Activated T-helper 1 cell treated with anti-CD3 and anti-CD28 coated beads, Interleukin-12 subunit alpha, Interleukin-12 subunit beta, Interleukin-2, Interleukin-4 antibody, amounts not matched to agents 30 ng/mL and 10 ng/mL and 1 ng/mL, durations not matched to agents 14 hours and 24 hours and 36 hours (primary cell): ENCODE measurements at regions of chr9 and their contacts with region 1.

Region 1: DNA sequence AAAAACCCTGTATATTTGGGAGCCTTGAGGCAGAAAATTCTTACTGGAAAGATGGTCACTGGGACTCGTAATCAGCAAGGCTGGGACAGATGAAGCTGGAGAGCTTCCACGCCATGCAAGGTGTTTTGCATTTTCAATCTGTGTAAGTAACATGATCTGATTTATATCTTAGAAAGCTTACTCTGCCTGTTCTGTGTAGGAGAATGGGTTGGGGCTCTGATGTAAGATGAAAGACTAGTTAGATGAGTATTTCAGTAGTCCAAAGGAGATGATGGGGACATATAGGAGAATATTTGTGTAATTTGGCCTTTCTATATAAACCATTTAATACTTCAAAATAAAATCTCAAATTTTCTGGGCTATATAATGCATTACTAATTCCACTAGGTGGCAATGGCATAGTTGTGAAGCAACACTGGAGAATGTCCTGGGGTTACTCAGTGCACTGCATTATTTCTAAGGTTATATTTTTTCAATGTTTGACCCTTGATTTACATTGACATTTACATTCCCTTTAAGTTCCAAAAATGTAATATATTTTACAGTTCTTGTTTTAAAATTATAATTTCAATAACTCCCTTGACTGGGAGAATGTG is 21.9 kb upstream of the FSD1L start:
- DNase-seq: no peak
- H3K4me3 Mint-ChIP-seq: no peak overlapping the region
- H3K27ac Mint-ChIP-seq: no peak overlapping the region
- H3K4me1 Mint-ChIP-seq: no peaks in the 10 kb centered on the region
- H3K27me3 Mint-ChIP-seq: peaks cover 12% of the 10 kb centered on the region

Region 2: GRCh38 chr9:105299190-105299854 is 126.6 kb before region 1 on chr9:
- intact Hi-C with region 1: no loop called
- DNase-seq: no peak
- H3K4me3 Mint-ChIP-seq: no peak overlapping the region
- H3K27ac Mint-ChIP-seq: no peak overlapping the region
- H3K4me1 Mint-ChIP-seq: peaks cover 11% of the 10 kb centered on the region
- H3K27me3 Mint-ChIP-seq: peaks cover 2% of the 10 kb centered on the region

Region 3: GRCh38 chr9:105475302-105475701 is 49.4 kb after region 1 on chr9:
- intact Hi-C with region 1: loop called (anchors 2 kb)
- DNase-seq: no peak
- H3K4me3 Mint-ChIP-seq: no peak overlapping the region
- H3K27ac Mint-ChIP-seq: no peak overlapping the region
- H3K4me1 Mint-ChIP-seq: no peaks in the 10 kb centered on the region
- H3K27me3 Mint-ChIP-seq: no peaks in the 10 kb centered on the region

Region 4: GRCh38 chr9:105557771-105558610 is 132.1 kb after region 1 on chr9 and contains the start of gene FKTN:
- intact Hi-C with region 1: loop called (anchors 1 kb)
- DNase-seq: peak; percentile 76
- H3K4me3 Mint-ChIP-seq: peak within 1 kb of the TSS; percentile 94
- H3K27ac Mint-ChIP-seq: peak within 1 kb of the TSS; percentile 71
- H3K4me1 Mint-ChIP-seq: peaks cover 22% of the 10 kb centered on the region
- H3K27me3 Mint-ChIP-seq: no peaks in the 10 kb centered on the region
- total RNA-seq, gene FKTN: 12.4 and 12.6 TPM in 2 replicates

Region 5: DNA sequence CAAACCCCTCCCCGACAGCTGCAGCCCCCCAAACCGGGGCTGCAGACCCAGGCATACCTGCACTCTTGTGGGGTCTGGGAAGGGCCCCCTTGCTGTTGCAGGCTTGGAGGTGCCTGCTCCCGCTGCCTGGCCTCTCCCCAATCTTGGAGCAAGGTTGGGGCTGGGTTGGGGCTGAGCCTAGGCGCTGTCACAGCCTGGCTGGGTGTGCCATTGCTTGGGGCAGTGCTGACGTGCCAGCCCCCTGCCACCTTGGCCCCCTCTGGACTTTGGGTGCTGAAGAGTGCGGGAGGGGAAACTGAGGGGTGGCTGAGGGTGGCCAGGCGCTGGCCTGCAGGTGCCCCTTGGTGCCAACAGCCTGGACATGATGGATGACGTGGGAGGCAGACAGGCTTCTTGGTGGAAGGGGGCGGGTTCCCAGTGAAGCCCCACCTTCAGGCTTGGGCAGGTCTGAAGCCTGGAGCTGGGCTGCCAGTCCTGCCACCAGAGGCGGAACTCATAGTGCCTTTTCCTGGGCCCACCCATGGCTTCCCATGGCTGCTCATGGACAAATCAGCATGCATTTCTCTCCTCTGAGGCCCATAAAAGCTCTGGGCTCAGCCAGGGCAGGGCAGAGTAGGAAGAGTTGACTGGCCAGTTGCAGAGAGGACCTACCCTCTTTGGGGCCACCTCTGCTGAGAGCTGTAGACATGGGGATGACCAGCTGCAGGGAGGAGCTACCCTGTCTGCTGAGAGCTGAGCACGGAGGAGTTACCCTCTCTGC is 287.5 kb after region 1 on chr9:
- intact Hi-C with region 1: loop called (anchors 2 kb)
- DNase-seq: no peak
- H3K4me3 Mint-ChIP-seq: no peak overlapping the region
- H3K27ac Mint-ChIP-seq: no peak overlapping the region
- H3K4me1 Mint-ChIP-seq: peaks cover 5% of the 10 kb centered on the region
- H3K27me3 Mint-ChIP-seq: no peaks in the 10 kb centered on the region

Region 6: GRCh38 chr9:105735366-105735765 is 309.4 kb after region 1 on chr9:
- intact Hi-C with region 1: no loop called
- DNase-seq: no peak
- H3K4me3 Mint-ChIP-seq: no peak overlapping the region
- H3K27ac Mint-ChIP-seq: no peak overlapping the region
- H3K4me1 Mint-ChIP-seq: no peaks in the 10 kb centered on the region
- H3K27me3 Mint-ChIP-seq: no peaks in the 10 kb centered on the region